HEK293 (cell line): ENCODE measurements at regions of chr2 and their contacts with region 1.

Region 1: GRCh38 chr2:120169020-120169419 is 54.2 kb downstream of the TMEM185B start:
- H3K4me3 ChIP-seq: no peak overlapping the region
- H3K27ac ChIP-seq: no peak overlapping the region
- H3K4me1 ChIP-seq: 0 out of 2 replicates have a peak, but pooled peaks cover 4% of the 10 kb centered on the region
- CTCF ChIP-seq: no peak

Region 2: GRCh38 chr2:120109186-120110061 is 59.6 kb before region 1 on chr2:
- CTCF ChIA-PET with region 1: interaction called, 29 read pairs
- POLR2A ChIA-PET with region 1: no interaction called
- H3K4me3 ChIP-seq: no peak overlapping the region
- H3K27ac ChIP-seq: no peak overlapping the region
- H3K4me1 ChIP-seq: peaks cover 16% of the 10 kb centered on the region
- CTCF ChIP-seq: peak; percentile 38; the same call in 1 of the 2 replicates

Region 3: DNA sequence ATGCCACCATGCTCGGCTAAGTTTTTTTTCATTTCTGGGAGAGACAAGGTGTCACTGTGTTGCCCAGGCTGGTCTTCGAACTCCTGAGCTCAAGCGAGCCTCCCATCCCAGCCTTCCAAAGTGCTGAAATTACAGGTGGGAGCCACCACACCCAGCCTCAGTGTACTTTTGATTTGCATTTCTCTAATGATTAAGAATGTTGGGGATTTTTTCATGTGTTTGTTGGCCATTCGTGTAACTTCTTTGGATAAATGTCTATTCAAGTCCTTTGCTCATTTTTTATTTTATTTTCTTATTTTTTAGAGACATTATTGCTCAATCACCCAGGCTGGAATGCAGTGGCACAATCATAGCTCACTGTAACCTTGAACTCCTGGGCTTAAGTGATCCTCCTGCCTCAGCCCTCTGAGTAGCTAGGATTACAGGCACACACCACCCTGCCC is 19.0 kb before region 1 on chr2:
- CTCF ChIA-PET with region 1: no interaction called
- POLR2A ChIA-PET with region 1: no interaction called
- H3K4me3 ChIP-seq: no peak overlapping the region
- H3K27ac ChIP-seq: no peak overlapping the region
- H3K4me1 ChIP-seq: no peaks in the 10 kb centered on the region
- CTCF ChIP-seq: no peak